ENCODE measurements at regions of chr20 and their contacts with region 1.

Region 1: GRCh38 chr20:37276494-37277252 is 12.8 kb upstream of the MANBAL start:
- DNase-seq: peak; percentile 77
- CTCF ChIP-seq: peak; percentile 55

Region 2: DNA sequence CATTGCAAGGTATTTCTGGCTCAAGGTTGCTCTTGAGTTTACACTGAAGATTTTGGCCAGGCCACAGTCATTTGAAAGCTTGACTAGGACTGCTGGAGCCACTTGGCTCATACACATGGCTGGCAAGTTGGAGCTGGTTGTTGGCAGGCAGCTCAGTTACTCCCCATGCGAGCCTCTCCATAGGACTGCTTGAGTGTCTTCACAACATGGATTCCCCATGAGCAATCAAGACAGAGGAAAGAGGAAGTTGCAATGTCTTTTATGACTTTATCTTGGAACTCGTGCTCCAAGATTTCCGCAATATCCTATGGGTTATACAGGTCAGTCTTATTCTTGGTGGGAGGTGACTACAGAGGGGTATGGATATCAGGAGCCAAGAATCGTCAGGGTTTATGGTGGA is 11.4 kb after region 1 on chr20:
- CTCF ChIA-PET with region 1: interaction called, 110 read pairs
- POLR2A ChIA-PET with region 1: no interaction called
- DNase-seq: no peak
- CTCF ChIP-seq: no peak

Region 3: GRCh38 chr20:37534401-37535157 is 257.9 kb after region 1 on chr20:
- CTCF ChIA-PET with region 1: interaction called, 153 read pairs
- POLR2A ChIA-PET with region 1: no interaction called
- DNase-seq: peak; percentile 77
- CTCF ChIP-seq: peak; percentile 68